Left ventricle myocardium inferior (tissue), 1 donor: ENCODE measurements at regions of chr1 and their contacts with region 1.

Region 1: GRCh38 chr1:111227851-111228747 is 586 bp downstream of the CHI3L2 start:
- DNase-seq: peak; percentile 24
- H3K4me3 ChIP-seq: no peak overlapping the region
- H3K27ac ChIP-seq: peak overlapping the region; percentile 74
- H3K4me1 ChIP-seq: peaks cover 4% of the 10 kb centered on the region
- H3K27me3 ChIP-seq: no peaks in the 10 kb centered on the region
- CTCF ChIP-seq: no peak

Region 2: GRCh38 chr1:110967256-110967655 is 260.8 kb before region 1 on chr1:
- intact Hi-C with region 1: no loop called
- DNase-seq: no peak
- H3K4me3 ChIP-seq: no peak overlapping the region
- H3K27ac ChIP-seq: no peak overlapping the region
- H3K4me1 ChIP-seq: peaks cover 20% of the 10 kb centered on the region
- H3K27me3 ChIP-seq: peaks cover 56% of the 10 kb centered on the region
- CTCF ChIP-seq: no peak

Region 3: DNA sequence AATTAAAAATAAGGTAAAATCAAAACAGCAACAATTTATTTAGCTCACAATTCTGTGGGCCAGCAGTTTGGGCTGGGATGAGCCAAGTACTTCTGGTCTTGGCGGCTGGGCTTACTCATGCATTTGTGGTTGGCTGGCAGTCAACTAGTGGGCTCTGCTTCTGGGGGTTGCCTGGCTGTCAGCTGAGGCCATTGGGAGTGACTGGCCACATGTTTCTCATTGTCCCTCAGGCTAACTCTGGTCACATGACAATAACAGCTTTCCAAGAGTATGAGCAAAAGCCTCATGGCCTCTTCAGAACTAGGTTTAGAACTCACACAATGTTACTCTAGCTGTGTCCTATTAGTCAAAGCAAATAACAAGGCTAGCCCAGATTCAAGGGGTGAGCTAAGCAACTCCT is 47.0 kb after region 1 on chr1:
- intact Hi-C with region 1: loop called (anchors 5 kb)
- DNase-seq: peak; percentile 71
- H3K4me3 ChIP-seq: no peak overlapping the region
- H3K27ac ChIP-seq: peak overlapping the region; percentile 45
- H3K4me1 ChIP-seq: peaks cover 8% of the 10 kb centered on the region
- H3K27me3 ChIP-seq: peaks cover 31% of the 10 kb centered on the region
- CTCF ChIP-seq: no peak

Region 4: DNA sequence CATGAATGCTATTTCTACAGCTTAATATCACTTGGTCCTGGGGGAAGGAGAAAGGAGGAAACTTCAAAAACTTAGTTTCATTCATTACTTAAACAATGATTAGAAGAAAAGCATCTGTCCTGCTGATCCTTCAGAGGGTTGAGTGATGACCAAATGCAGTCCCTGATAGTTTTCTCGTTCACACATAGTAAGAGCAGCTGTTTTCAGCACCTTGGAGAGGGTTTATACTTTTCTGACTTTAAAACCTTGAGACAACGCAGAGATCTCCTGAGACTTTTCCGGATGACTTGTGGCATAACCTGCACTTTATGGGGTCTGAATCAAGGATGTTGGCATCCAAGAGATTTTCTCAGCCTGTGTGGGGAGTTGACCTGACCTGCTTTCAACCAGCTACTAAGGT is 855.4 kb after region 1 on chr1:
- intact Hi-C with region 1: no loop called
- DNase-seq: no peak
- H3K4me3 ChIP-seq: no peak overlapping the region
- H3K27ac ChIP-seq: no peak overlapping the region
- H3K4me1 ChIP-seq: no peaks in the 10 kb centered on the region
- H3K27me3 ChIP-seq: peaks cover 10% of the 10 kb centered on the region
- CTCF ChIP-seq: no peak